ENCODE measurements at regions of chr12 and their contacts with region 1.

Region 1: GRCh38 chr12:50986966-50987737 is 34.8 kb downstream of the HIGD1C start:
- DNase-seq: peak in 18 of 35 experiments; percentile 1 to 59 (median 12)
- ATAC-seq: peak; percentile 60 to 79 (median 72)
- H3K4me3 ChIP-seq: no peak overlapping the region
- H3K4me3 Mint-ChIP-seq: no peak overlapping the region
- H3K27ac ChIP-seq: no peak overlapping the region
- H3K27ac Mint-ChIP-seq: peak overlapping the region in 1 of 2 donors; percentile 78
- H3K4me1 ChIP-seq: no peaks in the 10 kb centered on the region
- H3K4me1 Mint-ChIP-seq: peaks cover 0 to 9% (median 9%) of the 10 kb centered on the region in 3 donors
- H3K27me3 ChIP-seq: no peaks in the 10 kb centered on the region
- H3K27me3 Mint-ChIP-seq: no peaks in the 10 kb centered on the region

Region 2: GRCh38 chr12:50825372-50825838 is 161.7 kb before region 1 on chr12:
- CTCF ChIA-PET with region 1: interaction called, 4 to 34 read pairs
- POLR2A ChIA-PET with region 1: interaction called in 1 of 2 experiments, 9 read pairs
- DNase-seq: peak in 1 of 35 experiments; percentile 77
- ATAC-seq: peak; percentile 59 to 93 (median 66)
- H3K4me3 ChIP-seq: no peak overlapping the region
- H3K4me3 Mint-ChIP-seq: no peak overlapping the region
- H3K27ac ChIP-seq: peak overlapping the region; percentile 65
- H3K27ac Mint-ChIP-seq: peak overlapping the region; percentile 39 to 80
- H3K4me1 ChIP-seq: peaks cover 2 to 3% of the 10 kb centered on the region in 2 experiments
- H3K4me1 Mint-ChIP-seq: peaks cover 6 to 10% (median 6%) of the 10 kb centered on the region in 3 donors
- H3K27me3 ChIP-seq: no peaks in the 10 kb centered on the region
- H3K27me3 Mint-ChIP-seq: no peaks in the 10 kb centered on the region

Region 3: DNA sequence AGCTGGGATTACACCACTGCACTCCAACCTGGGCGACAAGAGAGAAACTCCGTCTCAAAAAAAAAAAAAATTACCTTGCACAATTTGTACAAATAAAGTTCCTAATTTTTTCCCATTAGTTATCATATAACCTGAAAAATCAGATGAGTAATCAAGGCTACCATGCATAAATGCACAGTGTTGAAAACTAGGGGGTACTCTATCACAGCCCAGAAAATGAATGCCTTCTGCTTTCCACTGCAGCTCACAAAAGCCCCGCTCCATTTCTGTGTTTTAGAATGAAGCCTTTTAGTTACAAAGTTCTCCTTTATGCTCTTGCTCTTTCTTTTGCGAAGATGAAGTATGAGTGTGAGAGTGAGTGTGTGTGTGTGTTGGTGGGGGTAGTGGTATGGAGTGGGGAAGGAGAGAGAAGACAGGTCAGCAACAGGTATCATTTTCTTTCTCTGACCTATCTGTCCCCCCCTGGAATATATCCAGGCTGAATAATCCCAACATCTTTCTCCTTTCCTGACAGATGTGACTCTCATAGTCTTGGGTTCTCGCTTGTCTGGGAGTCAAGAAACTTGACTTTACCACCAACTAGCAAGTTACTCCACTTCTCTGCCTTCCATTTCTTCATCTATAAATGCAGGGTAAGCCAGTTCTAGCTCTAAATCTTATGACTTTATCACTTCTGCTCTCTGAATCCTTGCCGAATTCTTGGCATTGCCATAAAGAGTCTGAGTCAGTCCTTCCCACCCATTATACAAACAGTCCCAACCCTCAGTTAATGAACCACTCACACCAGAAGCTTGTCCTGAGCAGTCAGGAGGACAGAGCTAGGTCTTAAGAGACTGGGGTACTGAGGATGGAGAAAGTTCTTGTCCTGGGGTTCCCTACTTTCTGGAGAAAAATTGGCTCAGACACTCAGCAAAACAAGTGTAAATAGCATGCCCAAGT is 320.8 kb after region 1 on chr12:
- CTCF ChIA-PET with region 1: no interaction called
- POLR2A ChIA-PET with region 1: no interaction called
- DNase-seq: peak in 1 of 35 experiments; percentile 39
- ATAC-seq: peak in 3 of 4 experiments; percentile 53 to 73 (median 55)
- H3K4me3 ChIP-seq: no peak overlapping the region
- H3K4me3 Mint-ChIP-seq: peak overlapping the region in 1 of 3 donors; percentile 6
- H3K27ac ChIP-seq: peak overlapping the region; percentile 11
- H3K27ac Mint-ChIP-seq: peak overlapping the region; percentile 87 to 89
- H3K4me1 ChIP-seq: peaks cover 9 to 37% of the 10 kb centered on the region in 2 experiments
- H3K4me1 Mint-ChIP-seq: peaks cover 62 to 75% (median 69%) of the 10 kb centered on the region in 3 donors
- H3K27me3 ChIP-seq: no peaks in the 10 kb centered on the region
- H3K27me3 Mint-ChIP-seq: no peaks in the 10 kb centered on the region